Breast epithelium (tissue), 4 donors: ENCODE measurements at regions of chr9 and their contacts with region 1.

Region 1: GRCh38 chr9:104200456-104200994 is 106.4 kb downstream of the SMC2 start:
- DNase-seq: no peak
- H3K4me3 ChIP-seq: no peak overlapping the region
- H3K27ac ChIP-seq: no peak overlapping the region
- H3K4me1 ChIP-seq: no peaks in the 10 kb centered on the region
- H3K27me3 ChIP-seq: no peaks in the 10 kb centered on the region
- CTCF ChIP-seq: no peak
- POLR2A ChIP-seq: no peak

Region 2: DNA sequence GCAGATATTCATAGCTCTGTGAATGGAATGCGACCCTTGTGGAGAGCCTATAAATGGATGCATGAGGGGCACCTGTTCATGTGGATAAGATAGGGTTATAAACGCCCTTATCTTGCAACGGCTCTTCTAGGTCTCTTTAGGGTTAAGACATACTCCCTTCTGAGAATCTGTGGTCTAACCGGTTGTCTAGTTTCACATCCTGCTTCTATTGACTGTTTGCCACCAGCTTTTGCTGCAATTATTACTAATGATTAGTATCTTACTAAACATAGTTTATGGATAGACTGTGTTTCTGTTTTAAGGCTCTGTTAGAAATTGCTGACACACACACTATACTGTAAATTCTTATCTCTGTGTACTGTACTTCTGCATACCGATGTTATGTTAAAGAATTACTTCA is 1404.3 kb before region 1 on chr9:
- intact Hi-C with region 1: no loop called
- DNase-seq: no peak
- H3K4me3 ChIP-seq: no peak overlapping the region
- H3K27ac ChIP-seq: no peak overlapping the region
- H3K4me1 ChIP-seq: no peaks in the 10 kb centered on the region
- H3K27me3 ChIP-seq: no peaks in the 10 kb centered on the region
- CTCF ChIP-seq: no peak
- POLR2A ChIP-seq: no peak

Region 3: GRCh38 chr9:104138243-104138868 is 62.2 kb before region 1 on chr9:
- intact Hi-C with region 1: loop called (anchors 2 kb)
- DNase-seq: no peak
- H3K4me3 ChIP-seq: no peak overlapping the region
- H3K27ac ChIP-seq: no peak overlapping the region
- H3K4me1 ChIP-seq: no peaks in the 10 kb centered on the region
- H3K27me3 ChIP-seq: no peaks in the 10 kb centered on the region
- CTCF ChIP-seq: no peak
- POLR2A ChIP-seq: no peak

Region 4: GRCh38 chr9:104339692-104340091 is 139.2 kb after region 1 on chr9:
- intact Hi-C with region 1: no loop called
- DNase-seq: no peak
- H3K4me3 ChIP-seq: no peak overlapping the region
- H3K27ac ChIP-seq: no peak overlapping the region
- H3K4me1 ChIP-seq: no peaks in the 10 kb centered on the region
- H3K27me3 ChIP-seq: no peaks in the 10 kb centered on the region
- CTCF ChIP-seq: no peak
- POLR2A ChIP-seq: no peak